ENCODE measurements at regions of chr11 and their contacts with region 1.

Region 1: DNA sequence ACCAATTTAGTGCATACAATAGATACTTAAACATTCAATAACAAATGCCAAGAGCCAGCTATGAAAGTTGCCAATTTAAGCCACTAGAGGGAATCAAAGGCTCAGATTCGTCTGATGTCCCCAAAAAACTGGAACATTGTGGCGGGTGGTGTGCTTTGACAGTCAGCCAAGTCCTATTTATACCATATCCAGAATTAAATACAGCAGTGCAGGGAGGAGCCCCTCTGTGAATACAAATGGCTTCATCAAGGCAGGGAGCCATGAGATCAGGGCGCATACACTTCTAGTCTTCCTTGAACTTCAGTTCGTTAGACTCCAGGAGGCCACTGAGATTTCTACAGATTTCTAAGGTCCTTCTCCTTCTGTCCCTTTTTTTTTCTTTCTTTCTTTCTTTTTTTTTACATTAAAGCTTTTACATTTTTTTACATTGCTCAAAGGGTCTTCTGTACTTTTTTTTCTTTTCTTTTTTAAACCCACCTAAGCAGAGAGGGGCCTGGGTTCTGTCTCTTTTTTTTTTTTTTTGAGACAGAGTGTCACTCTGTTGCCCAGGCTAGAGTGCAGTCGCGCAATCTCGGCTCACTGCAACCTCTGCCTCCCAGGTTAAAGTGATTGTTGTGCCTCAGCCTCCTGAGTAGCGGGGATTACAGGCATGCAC is 41.5 kb upstream of the HSPA8 start:
- DNase-seq: peak; percentile 45
- H3K4me3 ChIP-seq: no peak overlapping the region
- CTCF ChIP-seq: peak; percentile 48

Region 2: DNA sequence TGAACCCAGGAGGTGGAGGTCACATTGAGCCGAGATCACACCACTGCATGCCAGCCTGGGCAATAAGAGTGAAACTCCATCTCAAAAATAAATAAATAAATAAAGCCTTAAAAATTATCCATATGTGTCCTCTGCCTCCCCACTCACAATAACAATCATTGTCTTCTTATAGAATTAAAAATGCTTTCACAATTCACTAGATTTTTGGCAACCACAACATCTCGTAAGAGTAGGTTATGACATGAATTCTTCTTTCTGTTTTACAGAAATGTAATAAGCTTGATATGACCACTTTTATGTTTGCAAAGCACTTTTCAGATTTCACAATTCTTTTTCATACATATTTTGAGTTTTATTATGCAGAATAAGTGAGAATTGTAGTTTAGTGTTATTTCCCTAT is 13.0 kb after region 1 on chr11:
- CTCF ChIA-PET with region 1: interaction called, 42 read pairs
- POLR2A ChIA-PET with region 1: no interaction called
- DNase-seq: no peak
- H3K4me3 ChIP-seq: no peak overlapping the region
- CTCF ChIP-seq: no peak

Region 3: DNA sequence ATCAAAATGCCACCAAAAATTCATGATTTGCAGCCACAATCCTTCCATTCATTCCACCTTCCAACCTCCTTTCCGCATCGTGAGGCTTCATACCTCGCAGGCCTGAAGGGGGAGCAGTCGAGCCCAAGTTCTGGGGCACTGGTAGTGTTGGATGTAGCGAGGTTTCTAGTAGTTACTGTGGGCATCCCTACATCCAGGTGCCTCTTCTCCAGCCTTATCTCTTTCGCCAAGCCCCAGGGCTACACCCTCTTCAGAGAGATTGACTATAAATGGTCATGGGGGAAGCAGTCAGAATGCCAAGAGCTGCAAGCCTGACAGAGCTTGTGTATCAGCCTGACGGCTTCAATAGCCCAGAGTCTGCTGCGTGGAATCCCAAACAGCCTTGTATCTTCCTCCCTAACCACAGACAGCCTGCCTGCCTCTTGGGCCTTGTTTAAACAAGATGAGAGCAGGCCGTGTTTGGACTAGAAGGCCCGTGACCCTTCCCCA is 62.7 kb after region 1 on chr11:
- CTCF ChIA-PET with region 1: interaction called, 16 read pairs
- POLR2A ChIA-PET with region 1: no interaction called
- DNase-seq: peak; percentile 75
- H3K4me3 ChIP-seq: no peak overlapping the region
- CTCF ChIP-seq: peak; percentile 75